ENCODE measurements at regions of chr9 and their contacts with region 1.

Region 1: GRCh38 chr9:99140685-99141314 is 35.9 kb downstream of the TGFBR1 start:
- DNase-seq: peak in 4 of 5 donors; percentile 31 to 62 (median 47)
- H3K4me3 ChIP-seq: no peak overlapping the region
- H3K4me3 Mint-ChIP-seq: no peak overlapping the region
- H3K27ac ChIP-seq: no peak overlapping the region
- H3K27ac Mint-ChIP-seq: peak overlapping the region; percentile 10 to 85 (median 42)
- H3K4me1 ChIP-seq: peaks cover 28% of the 10 kb centered on the region
- H3K4me1 Mint-ChIP-seq: peaks cover 39 to 51% (median 44%) of the 10 kb centered on the region in 3 donors
- H3K27me3 ChIP-seq: no peaks in the 10 kb centered on the region
- H3K27me3 Mint-ChIP-seq: no peaks in the 10 kb centered on the region

Region 2: DNA sequence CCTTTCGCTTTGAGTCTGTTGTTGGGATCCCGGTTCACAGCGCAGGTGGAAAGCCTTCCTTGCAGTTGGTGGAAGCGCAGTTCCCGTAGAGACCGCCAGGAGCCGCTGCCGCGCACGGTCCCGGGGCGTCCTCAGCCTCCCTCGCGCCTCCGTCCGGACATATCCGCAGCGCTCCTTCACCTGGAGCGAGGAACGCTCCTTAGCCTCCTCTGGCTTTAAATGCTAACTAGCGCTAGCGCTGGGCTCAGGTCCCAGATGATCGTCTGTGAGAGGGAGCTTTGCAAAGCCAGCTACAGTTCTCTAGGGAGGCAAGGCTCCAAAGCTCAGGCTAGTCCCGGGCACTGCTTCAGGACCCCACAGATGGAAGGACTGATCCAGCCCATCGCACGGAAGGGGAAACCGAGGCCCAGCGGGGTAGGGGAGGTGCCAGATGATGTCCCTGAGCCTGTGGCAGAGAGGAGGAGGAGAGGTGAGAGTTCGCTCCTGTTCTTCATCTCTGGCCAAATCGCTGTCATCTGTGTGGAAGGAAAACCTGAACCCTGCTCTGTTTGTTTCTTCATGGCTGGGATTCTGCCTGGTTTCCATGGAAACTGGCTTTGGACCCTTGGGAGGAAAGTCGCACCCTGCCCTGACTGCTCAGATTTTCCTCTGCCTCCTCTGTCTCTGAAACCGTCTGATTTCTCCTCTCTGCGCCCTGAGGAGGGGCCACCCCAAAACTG is 165.6 kb before region 1 on chr9:
- CTCF ChIA-PET with region 1: interaction called, 74 read pairs
- POLR2A ChIA-PET with region 1: no interaction called
- DNase-seq: peak; percentile 63 to 81 (median 73)
- H3K4me3 ChIP-seq: peak overlapping the region; percentile 62
- H3K4me3 Mint-ChIP-seq: peak overlapping the region in 6 of 7 donors; percentile 47 to 86 (median 66)
- H3K27ac ChIP-seq: no peak overlapping the region
- H3K27ac Mint-ChIP-seq: peak overlapping the region in 1 of 8 donors; percentile 58
- H3K4me1 ChIP-seq: peaks cover 8% of the 10 kb centered on the region
- H3K4me1 Mint-ChIP-seq: peaks cover 4 to 7% (median 6%) of the 10 kb centered on the region in 3 donors
- H3K27me3 ChIP-seq: peaks cover 9% of the 10 kb centered on the region
- H3K27me3 Mint-ChIP-seq: peaks cover 12 to 14% of the 10 kb centered on the region in 2 donors

Region 3: DNA sequence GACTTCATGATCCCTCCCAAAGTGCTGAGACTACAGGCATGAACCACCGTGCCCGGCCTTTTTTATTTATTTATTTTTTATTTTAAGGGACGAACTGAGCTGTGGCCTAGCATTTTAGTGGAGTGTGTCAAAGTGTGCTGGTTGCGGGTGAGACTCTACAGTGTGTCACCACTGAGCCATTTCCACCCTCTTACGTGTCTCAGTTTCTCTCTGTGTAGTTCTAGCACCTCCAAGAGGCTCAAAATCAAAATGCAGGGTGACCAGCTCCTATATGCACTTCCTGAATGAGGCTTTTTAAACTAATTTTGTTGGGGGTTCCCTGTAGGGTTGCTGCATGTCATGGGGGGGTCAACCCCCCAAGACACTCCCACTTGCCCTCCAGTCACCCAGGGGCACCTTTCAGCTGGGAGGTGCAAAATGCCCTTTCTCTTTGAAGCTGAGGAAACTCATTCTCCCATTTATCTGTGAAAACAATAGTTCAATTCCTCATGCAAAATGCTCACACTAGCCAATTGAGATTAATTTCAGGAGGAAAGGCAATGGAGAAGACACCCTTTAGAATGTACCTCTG is 127.8 kb before region 1 on chr9:
- CTCF ChIA-PET with region 1: interaction called, 20 read pairs
- POLR2A ChIA-PET with region 1: no interaction called
- DNase-seq: peak in 2 of 5 donors; percentile 20 to 36
- H3K4me3 ChIP-seq: no peak overlapping the region
- H3K4me3 Mint-ChIP-seq: peak overlapping the region; percentile 37 to 87 (median 79)
- H3K27ac ChIP-seq: peak overlapping the region; percentile 12
- H3K27ac Mint-ChIP-seq: peak overlapping the region; percentile 82 to 98 (median 92)
- H3K4me1 ChIP-seq: peaks cover 18% of the 10 kb centered on the region
- H3K4me1 Mint-ChIP-seq: peaks cover 25 to 35% (median 29%) of the 10 kb centered on the region in 3 donors
- H3K27me3 ChIP-seq: no peaks in the 10 kb centered on the region
- H3K27me3 Mint-ChIP-seq: no peaks in the 10 kb centered on the region

Region 4: DNA sequence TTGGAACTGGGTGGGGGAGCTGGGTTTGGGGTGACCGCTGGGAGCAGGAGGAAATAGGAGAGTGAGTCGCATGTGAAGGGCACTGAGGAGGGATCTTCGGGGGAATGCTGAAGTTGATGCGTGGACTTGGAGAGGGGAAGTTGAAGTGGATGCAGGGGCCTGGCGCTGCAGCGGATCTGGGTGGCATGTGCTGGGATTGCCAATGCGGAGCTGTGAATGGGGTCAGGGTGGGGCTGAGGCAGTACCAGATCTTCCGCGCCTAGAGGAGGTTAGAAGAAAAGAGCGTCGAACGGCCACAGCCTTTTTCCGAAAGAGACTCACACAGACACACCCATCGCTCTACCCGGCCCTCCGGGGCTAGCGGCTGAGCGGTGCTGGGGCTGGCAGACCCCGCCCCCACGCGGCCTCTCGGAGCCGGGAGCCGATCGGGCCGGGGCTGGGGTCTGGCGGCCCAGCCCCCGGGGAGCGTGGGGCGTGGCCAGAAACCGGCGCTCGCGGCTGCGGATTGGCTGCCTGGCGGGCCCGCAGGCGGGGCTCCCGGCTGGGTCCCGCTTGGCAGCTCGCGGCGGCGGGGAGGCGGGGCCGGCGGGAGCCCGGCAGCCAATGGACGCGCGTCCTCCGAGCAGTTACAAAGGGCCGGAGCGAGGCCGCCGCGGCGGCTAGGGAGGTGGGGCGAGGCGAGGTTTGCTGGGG is 36.2 kb before region 1 on chr9 and contains the start of gene TGFBR1:
- CTCF ChIA-PET with region 1: interaction called, 39 read pairs
- POLR2A ChIA-PET with region 1: interaction called, 6 read pairs
- DNase-seq: peak; percentile 90 to 94 (median 92)
- H3K4me3 ChIP-seq: peak within 1 kb of the TSS; percentile 66
- H3K4me3 Mint-ChIP-seq: peak within 1 kb of the TSS; percentile 85 to 94 (median 93)
- H3K27ac ChIP-seq: peak within 1 kb of the TSS; percentile 64
- H3K27ac Mint-ChIP-seq: peak within 1 kb of the TSS; percentile 79 to 99 (median 92)
- H3K4me1 ChIP-seq: peaks cover 45% of the 10 kb centered on the region
- H3K4me1 Mint-ChIP-seq: peaks cover 71 to 75% (median 74%) of the 10 kb centered on the region in 3 donors
- H3K27me3 ChIP-seq: no peaks in the 10 kb centered on the region
- H3K27me3 Mint-ChIP-seq: no peaks in the 10 kb centered on the region
- total RNA-seq, gene TGFBR1: 36.6 to 41.9 TPM

Region 5: DNA sequence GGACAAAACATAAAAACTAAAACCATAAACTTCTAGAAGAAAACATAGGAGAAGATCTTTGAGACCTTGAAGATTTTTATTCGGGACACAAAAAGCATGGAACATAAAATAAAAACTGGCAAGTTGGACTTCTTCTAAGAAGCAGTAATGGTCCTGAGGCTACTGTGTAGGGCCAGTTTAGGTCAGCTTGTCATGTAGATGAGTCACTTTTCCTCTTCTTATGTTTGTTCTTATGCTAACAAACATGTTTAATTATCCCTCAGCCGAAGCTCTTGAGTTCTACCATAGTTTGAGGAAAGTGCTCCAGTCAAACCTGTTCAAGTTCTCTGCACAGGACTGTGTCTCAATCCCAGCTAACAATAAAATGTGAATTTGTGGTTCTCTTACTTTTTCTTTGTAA is 399.1 kb after region 1 on chr9:
- CTCF ChIA-PET with region 1: no interaction called
- POLR2A ChIA-PET with region 1: no interaction called
- DNase-seq: no peak
- H3K4me3 ChIP-seq: no peak overlapping the region
- H3K4me3 Mint-ChIP-seq: no peak overlapping the region
- H3K27ac ChIP-seq: no peak overlapping the region
- H3K27ac Mint-ChIP-seq: no peak overlapping the region
- H3K4me1 ChIP-seq: no peaks in the 10 kb centered on the region
- H3K4me1 Mint-ChIP-seq: no peaks in the 10 kb centered on the region
- H3K27me3 ChIP-seq: no peaks in the 10 kb centered on the region
- H3K27me3 Mint-ChIP-seq: peaks cover 3 to 25% of the 10 kb centered on the region in 2 donors